ENCODE measurements at regions of chr3 and their contacts with region 1.

Region 1: DNA sequence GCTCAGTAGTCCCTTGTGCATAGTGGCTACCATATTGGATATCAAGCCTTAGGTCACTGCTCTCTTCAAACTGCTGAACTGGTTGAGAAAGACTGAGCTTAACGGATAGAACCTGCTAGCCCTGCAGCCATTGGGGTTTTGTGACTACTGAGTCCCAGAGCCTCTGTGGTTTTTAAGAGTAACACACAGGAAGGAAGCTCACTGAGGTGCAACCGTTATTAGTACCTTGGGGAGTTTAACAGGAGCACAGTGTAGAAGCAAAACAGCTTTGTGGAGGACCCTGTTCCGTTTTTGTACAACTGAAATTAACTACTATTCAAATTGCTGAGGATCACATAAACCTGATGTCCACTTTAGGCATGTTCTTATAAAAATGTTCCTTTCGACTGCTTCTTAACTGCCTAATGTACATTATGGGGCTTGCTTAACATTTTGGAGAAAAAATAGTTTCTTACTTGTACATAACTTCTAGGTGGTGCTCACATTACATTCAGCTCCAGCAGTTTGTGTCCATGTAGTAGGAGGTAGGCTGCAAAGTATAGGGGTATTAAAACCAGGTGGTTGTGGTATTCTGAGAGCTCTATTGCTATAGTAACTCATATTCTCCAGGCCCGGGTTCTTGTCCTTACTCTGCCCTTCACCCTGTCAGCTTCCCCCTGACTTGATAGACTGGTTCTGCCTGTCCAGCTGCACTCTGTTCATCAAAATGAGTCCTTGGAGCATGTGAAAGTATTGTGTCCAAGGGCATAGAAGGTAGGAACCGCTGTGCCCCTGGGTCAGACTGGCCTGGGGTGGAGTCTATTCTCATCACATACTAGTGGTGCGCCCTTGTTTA is 17.3 kb downstream of the PXK start:
- DNase-seq: peak; percentile 16
- H3K4me3 Mint-ChIP-seq: peak overlapping the region; percentile 21
- H3K27ac Mint-ChIP-seq: peak overlapping the region; percentile 73
- H3K4me1 Mint-ChIP-seq: peaks cover 80% of the 10 kb centered on the region
- H3K27me3 Mint-ChIP-seq: no peaks in the 10 kb centered on the region

Region 2: DNA sequence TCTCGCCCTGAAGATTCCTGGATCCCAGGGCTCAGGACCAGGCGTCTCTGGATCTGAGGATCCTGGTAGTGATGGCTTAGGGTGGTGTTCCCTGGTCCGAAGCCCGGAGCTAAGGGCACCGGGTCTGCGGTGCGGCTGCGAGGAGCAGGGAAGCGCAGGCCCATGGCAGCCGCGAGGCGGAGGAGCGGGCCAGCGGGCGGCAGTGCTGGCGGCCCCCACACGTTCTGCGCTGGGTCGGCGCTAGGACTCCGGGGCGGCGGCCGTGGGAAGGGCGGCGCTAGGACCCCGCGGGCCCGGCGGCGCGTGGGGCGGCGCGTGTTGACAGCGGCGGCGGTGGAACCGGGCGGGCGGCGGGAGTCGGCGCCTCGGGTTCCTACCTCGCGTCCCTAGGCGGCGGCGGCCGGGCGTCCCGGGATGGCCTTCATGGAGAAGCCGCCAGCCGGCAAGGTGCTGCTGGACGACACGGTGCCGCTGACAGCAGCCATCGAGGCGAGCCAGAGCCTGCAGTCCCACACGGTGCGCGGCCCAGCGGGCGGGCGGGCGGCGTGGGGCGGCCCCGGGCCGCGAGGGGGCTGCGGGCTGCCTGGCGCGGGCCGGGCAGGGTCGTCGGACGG is 17.3 kb before region 1 on chr3 and contains the start of gene PXK:
- CTCF ChIA-PET with region 1: interaction called, 14 read pairs
- POLR2A ChIA-PET with region 1: interaction called, 7 read pairs
- DNase-seq: peak; percentile 75
- H3K4me3 Mint-ChIP-seq: peak within 1 kb of the TSS; percentile 100
- H3K27ac Mint-ChIP-seq: peak within 1 kb of the TSS; percentile 97
- H3K4me1 Mint-ChIP-seq: peaks cover 46% of the 10 kb centered on the region
- H3K27me3 Mint-ChIP-seq: no peaks in the 10 kb centered on the region
- total RNA-seq, gene PXK: 30.3 to 40.2 TPM